ENCODE measurements at regions of chr10 and their contacts with region 1.

Region 1: GRCh38 chr10:91251430-91252056 is 31.1 kb downstream of the PCGF5 start:
- DNase-seq: peak; percentile 38 to 69 (median 54)
- H3K4me3 ChIP-seq: no peak overlapping the region
- H3K4me3 Mint-ChIP-seq: no peak overlapping the region
- H3K27ac ChIP-seq: no peak overlapping the region
- H3K27ac Mint-ChIP-seq: no peak overlapping the region
- H3K4me1 ChIP-seq: no peaks in the 10 kb centered on the region
- H3K4me1 Mint-ChIP-seq: no peaks in the 10 kb centered on the region
- H3K27me3 ChIP-seq: no peaks in the 10 kb centered on the region
- H3K27me3 Mint-ChIP-seq: no peaks in the 10 kb centered on the region
- CTCF ChIP-seq: peak; percentile 96

Region 2: DNA sequence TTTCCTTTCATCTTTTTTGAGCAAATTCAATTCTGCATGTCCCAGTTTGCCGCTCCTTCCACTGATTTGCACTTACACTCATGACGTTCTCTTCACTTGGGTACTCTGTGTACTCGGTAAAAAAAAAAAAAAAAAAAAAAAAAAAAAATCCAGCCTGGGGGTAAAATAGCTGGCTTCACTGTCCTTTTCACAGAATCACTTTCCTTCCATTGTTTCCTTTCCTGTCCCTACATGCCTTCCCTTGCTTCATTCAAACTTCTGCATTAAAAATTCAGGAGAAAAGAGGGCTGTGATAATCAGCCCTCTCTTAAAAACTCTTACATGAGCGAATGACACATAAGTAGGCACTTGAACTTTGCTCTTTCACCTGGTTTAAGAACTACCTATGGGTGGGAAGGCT is 339.4 kb before region 1 on chr10:
- intact Hi-C with region 1: loop called in 1 of 2 experiments (anchors 10 kb)
- DNase-seq: no peak
- H3K4me3 ChIP-seq: no peak overlapping the region
- H3K4me3 Mint-ChIP-seq: no peak overlapping the region
- H3K27ac ChIP-seq: no peak overlapping the region
- H3K27ac Mint-ChIP-seq: no peak overlapping the region
- H3K4me1 ChIP-seq: no peaks in the 10 kb centered on the region
- H3K4me1 Mint-ChIP-seq: peaks cover 4% of the 10 kb centered on the region
- H3K27me3 ChIP-seq: no peaks in the 10 kb centered on the region
- H3K27me3 Mint-ChIP-seq: peaks cover 3 to 6% (median 6%) of the 10 kb centered on the region in 3 donors
- CTCF ChIP-seq: no peak

Region 3: GRCh38 chr10:90999512-91000172 is 251.9 kb before region 1 on chr10:
- intact Hi-C with region 1: loop called in 1 of 2 experiments (anchors 5 kb)
- DNase-seq: peak in 1 of 3 donors; percentile 59
- H3K4me3 ChIP-seq: no peak overlapping the region
- H3K4me3 Mint-ChIP-seq: no peak overlapping the region
- H3K27ac ChIP-seq: no peak overlapping the region
- H3K27ac Mint-ChIP-seq: no peak overlapping the region
- H3K4me1 ChIP-seq: no peaks in the 10 kb centered on the region
- H3K4me1 Mint-ChIP-seq: no peaks in the 10 kb centered on the region
- H3K27me3 ChIP-seq: no peaks in the 10 kb centered on the region
- H3K27me3 Mint-ChIP-seq: peaks cover 1 to 4% (median 1%) of the 10 kb centered on the region in 3 donors
- CTCF ChIP-seq: no peak

Region 4: DNA sequence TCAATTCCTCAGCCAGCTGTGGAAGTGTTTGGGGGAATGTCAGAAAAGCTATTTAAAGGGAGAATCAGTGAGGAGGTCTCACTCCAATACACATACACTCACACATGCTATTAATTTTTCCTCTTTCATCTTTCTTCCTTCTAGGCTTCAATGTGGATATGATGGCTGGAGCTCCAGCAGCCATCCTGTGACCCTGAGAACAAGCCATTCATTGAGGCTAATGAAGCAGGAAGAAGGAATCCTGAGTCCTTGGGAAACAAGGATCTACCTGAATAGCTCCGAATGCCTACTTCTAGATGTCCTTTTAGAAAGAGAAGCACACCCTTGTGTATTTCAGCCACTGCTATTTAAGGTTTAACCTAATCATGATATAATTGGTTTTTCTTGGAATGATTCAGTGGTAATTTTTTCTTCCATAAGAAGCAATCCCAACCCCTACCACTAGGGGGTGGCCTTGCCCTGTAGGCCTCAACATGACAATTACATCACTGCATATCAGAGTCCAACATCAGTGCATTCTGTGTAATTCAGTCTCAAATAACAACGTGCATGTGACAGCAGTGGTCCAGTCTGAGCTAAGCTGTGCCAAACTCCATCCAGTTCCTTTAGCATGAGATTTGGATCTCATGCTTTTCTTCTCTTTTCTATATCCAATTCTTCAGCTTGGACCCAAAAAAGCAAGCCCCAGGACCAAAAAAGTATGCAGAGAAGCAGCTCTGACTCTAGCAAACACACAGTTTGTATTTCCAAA is 245.4 kb before region 1 on chr10:
- intact Hi-C with region 1: loop called (anchors 2 to 5 kb)
- DNase-seq: peak; percentile 34 to 65 (median 47)
- H3K4me3 ChIP-seq: no peak overlapping the region
- H3K4me3 Mint-ChIP-seq: no peak overlapping the region
- H3K27ac ChIP-seq: no peak overlapping the region
- H3K27ac Mint-ChIP-seq: peak overlapping the region in 1 of 7 donors; percentile 15
- H3K4me1 ChIP-seq: no peaks in the 10 kb centered on the region
- H3K4me1 Mint-ChIP-seq: no peaks in the 10 kb centered on the region
- H3K27me3 ChIP-seq: no peaks in the 10 kb centered on the region
- H3K27me3 Mint-ChIP-seq: peaks cover 0 to 4% (median 0%) of the 10 kb centered on the region in 3 donors
- CTCF ChIP-seq: peak; percentile 96